GM12878 (cell line): ENCODE measurements at regions of chr1 and their contacts with region 1.

Region 1: GRCh38 chr1:39098546-39099250 is 72.5 kb downstream of the NDUFS5 start:
- DNase-seq: no peak
- ATAC-seq: peak; percentile 79
- H3K4me3 ChIP-seq: no peak overlapping the region
- H3K27ac ChIP-seq: no peak overlapping the region
- H3K4me1 ChIP-seq: peaks cover 13% of the 10 kb centered on the region
- H3K27me3 ChIP-seq: no peaks in the 10 kb centered on the region
- CTCF ChIP-seq: peak; percentile 76 to 87 (median 86)
- EP300 ChIP-seq: no peak
- POLR2A ChIP-seq: no peak
- RAD21 ChIP-seq: peak; percentile 96

Region 2: GRCh38 chr1:38941527-38942019 is 157.1 kb before region 1 on chr1 and contains the start of gene RHBDL2:
- CTCF ChIA-PET with region 1: no interaction called
- POLR2A ChIA-PET with region 1: no interaction called
- RAD21 ChIA-PET with region 1: no interaction called
- SMC1A ChIA-PET with region 1: no interaction called
- in situ Hi-C with region 1: no loop called
- intact Hi-C with region 1: no loop called
- DNase-seq: no peak
- ATAC-seq: no peak
- H3K4me3 ChIP-seq: no peak within 1 kb of the TSS
- H3K27ac ChIP-seq: no peak within 1 kb of the TSS
- H3K4me1 ChIP-seq: no peaks in the 10 kb centered on the region
- H3K27me3 ChIP-seq: no peaks in the 10 kb centered on the region; a peak in 1 of 4 replicates
- CTCF ChIP-seq: no peak
- EP300 ChIP-seq: no peak
- POLR2A ChIP-seq: no peak
- RAD21 ChIP-seq: no peak
- polyA plus RNA-seq, gene RHBDL2: 0.05 TPM in 1 of 2 experiments, not detected in the other

Region 3: GRCh38 chr1:39167632-39168209 is 69.0 kb after region 1 on chr1:
- CTCF ChIA-PET with region 1: interaction called, 10 read pairs
- POLR2A ChIA-PET with region 1: no interaction called
- RAD21 ChIA-PET with region 1: no interaction called
- SMC1A ChIA-PET with region 1: no interaction called
- in situ Hi-C with region 1: no loop called
- intact Hi-C with region 1: no loop called
- DNase-seq: no peak
- ATAC-seq: no peak
- H3K4me3 ChIP-seq: no peak overlapping the region
- H3K27ac ChIP-seq: no peak overlapping the region
- H3K4me1 ChIP-seq: no peaks in the 10 kb centered on the region
- H3K27me3 ChIP-seq: no peaks in the 10 kb centered on the region
- CTCF ChIP-seq: no peak
- EP300 ChIP-seq: no peak
- POLR2A ChIP-seq: no peak
- RAD21 ChIP-seq: no peak

Region 4: DNA sequence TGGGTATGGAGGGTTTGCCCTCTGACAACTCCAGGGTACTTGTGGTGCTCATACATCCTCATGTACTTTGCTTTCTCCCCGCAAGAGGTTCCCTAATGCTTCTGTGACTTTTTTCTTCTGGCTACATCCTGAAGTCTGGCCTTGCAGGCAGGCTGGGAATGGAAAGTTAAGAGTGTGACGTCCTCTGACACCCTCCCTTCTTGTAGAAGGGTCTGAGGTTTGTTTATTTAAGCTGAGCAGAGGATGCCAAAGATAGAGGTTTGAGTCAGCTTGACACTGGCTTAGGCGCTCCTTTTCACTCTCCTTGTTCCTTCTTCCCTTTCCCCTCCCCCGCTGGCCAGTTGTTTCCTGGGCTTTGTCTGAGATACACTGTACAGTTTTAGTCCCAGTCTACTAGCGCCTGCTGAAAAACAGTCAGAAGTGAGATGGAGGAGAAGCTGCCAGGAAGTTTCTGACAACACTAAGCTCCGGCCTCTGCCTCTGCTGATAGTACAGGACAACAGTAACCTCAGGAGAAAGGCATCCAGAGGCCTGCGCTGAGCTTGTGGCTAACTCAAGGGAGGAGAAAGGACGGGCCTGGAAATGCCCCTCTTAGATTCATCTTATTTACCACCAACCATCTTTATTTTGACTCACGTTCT is 105.9 kb after region 1 on chr1 and contains the start of gene MACF1:
- CTCF ChIA-PET with region 1: interaction called, 9 read pairs
- POLR2A ChIA-PET with region 1: interaction called, 3 read pairs
- RAD21 ChIA-PET with region 1: interaction called, 11 read pairs
- SMC1A ChIA-PET with region 1: interaction called, 3 read pairs
- in situ Hi-C with region 1: no loop called
- intact Hi-C with region 1: no loop called
- DNase-seq: no peak
- ATAC-seq: peak; percentile 70
- H3K4me3 ChIP-seq: peak within 1 kb of the TSS; percentile 67
- H3K27ac ChIP-seq: peak within 1 kb of the TSS; percentile 83
- H3K4me1 ChIP-seq: peaks cover 12% of the 10 kb centered on the region
- H3K27me3 ChIP-seq: no peaks in the 10 kb centered on the region
- CTCF ChIP-seq: no peak; a peak in 1 of 6 replicates
- EP300 ChIP-seq: no peak
- POLR2A ChIP-seq: no peak
- RAD21 ChIP-seq: 0 out of 2 replicates have a peak, but pooled peaks have one; percentile 15
- polyA plus RNA-seq, gene MACF1: 15.5 to 25.1 TPM

Region 5: DNA sequence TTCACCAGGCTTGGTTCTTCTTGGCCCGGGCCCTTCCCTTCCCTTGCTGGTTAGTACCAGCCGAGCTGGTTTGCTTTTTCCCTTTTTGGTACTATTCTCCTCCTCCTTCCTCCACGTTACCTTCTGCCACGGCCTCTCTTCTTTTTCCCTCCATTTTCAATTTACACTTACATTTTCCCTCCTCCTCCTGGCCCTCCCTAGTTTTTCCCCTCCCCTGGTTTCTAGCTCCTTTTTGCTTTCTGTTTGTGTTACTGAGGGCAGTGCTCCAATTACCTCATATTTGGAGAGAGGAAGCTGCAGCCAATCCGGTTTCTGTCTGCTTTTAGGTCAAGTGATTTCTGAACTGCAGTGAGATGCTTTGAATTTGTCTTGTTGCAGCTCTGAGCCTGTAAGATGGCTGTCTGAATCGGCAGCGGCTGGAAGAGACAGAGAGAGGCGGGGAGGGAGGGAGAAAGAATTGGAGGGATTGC is 169.4 kb after region 1 on chr1:
- CTCF ChIA-PET with region 1: interaction called, 44 read pairs
- POLR2A ChIA-PET with region 1: no interaction called
- RAD21 ChIA-PET with region 1: interaction called, 7 read pairs
- SMC1A ChIA-PET with region 1: interaction called, 52 read pairs
- in situ Hi-C with region 1: loop called (anchors 5 kb)
- intact Hi-C with region 1: no loop called
- DNase-seq: no peak
- ATAC-seq: peak; percentile 29
- H3K4me3 ChIP-seq: peak overlapping the region; percentile 57; the same call in 1 of the 2 replicates
- H3K27ac ChIP-seq: peak overlapping the region; percentile 81
- H3K4me1 ChIP-seq: peaks cover 57% of the 10 kb centered on the region
- H3K27me3 ChIP-seq: no peaks in the 10 kb centered on the region
- CTCF ChIP-seq: no peak
- EP300 ChIP-seq: no peak
- POLR2A ChIP-seq: peak; percentile 38; the same call in 1 of the 2 replicates
- RAD21 ChIP-seq: no peak

Region 6: DNA sequence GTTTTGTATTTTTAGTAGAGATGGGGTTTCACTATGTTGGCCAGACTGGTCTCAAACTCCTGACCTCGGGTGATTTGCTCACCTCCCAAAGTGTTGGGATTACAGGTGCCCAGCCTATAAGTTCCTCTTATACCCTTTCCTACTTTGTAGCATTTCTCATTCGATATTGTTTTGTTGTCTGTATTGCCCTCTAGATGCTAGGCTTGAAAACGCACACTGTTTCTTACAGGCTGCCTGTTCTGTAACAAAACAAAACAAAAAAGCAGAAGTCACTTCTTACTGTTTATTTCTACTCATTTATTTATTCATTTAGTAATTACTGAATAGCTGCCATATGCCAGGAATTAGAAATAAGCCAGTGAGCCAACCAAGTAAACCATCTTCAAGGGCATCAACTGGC is 255.9 kb after region 1 on chr1:
- CTCF ChIA-PET with region 1: interaction called, 10 read pairs
- POLR2A ChIA-PET with region 1: no interaction called
- RAD21 ChIA-PET with region 1: no interaction called
- SMC1A ChIA-PET with region 1: interaction called, 4 read pairs
- in situ Hi-C with region 1: no loop called
- intact Hi-C with region 1: no loop called
- DNase-seq: no peak
- ATAC-seq: no peak
- H3K4me3 ChIP-seq: no peak overlapping the region
- H3K27ac ChIP-seq: no peak overlapping the region
- H3K4me1 ChIP-seq: no peaks in the 10 kb centered on the region
- H3K27me3 ChIP-seq: no peaks in the 10 kb centered on the region
- CTCF ChIP-seq: peak in 2 of 3 experiments; percentile 7 to 20; a peak in 1 of 6 replicates
- EP300 ChIP-seq: no peak
- POLR2A ChIP-seq: no peak
- RAD21 ChIP-seq: 0 out of 2 replicates have a peak, but pooled peaks have one; percentile 7

Region 7: GRCh38 chr1:39609618-39610331 is 511.1 kb after region 1 on chr1:
- CTCF ChIA-PET with region 1: interaction called, 15 read pairs
- POLR2A ChIA-PET with region 1: no interaction called
- RAD21 ChIA-PET with region 1: interaction called, 4 read pairs
- SMC1A ChIA-PET with region 1: interaction called, 3 read pairs
- in situ Hi-C with region 1: no loop called
- intact Hi-C with region 1: loop called (anchors 5 kb)
- DNase-seq: no peak
- ATAC-seq: peak; percentile 97
- H3K4me3 ChIP-seq: no peak overlapping the region
- H3K27ac ChIP-seq: no peak overlapping the region
- H3K4me1 ChIP-seq: peaks cover 5% of the 10 kb centered on the region
- H3K27me3 ChIP-seq: no peaks in the 10 kb centered on the region
- CTCF ChIP-seq: peak; percentile 78 to 95 (median 81)
- EP300 ChIP-seq: no peak
- POLR2A ChIP-seq: no peak
- RAD21 ChIP-seq: peak; percentile 60

Region 8: GRCh38 chr1:39973503-39974135 is 874.9 kb after region 1 on chr1:
- CTCF ChIA-PET with region 1: no interaction called
- POLR2A ChIA-PET with region 1: no interaction called
- RAD21 ChIA-PET with region 1: no interaction called
- SMC1A ChIA-PET with region 1: no interaction called
- in situ Hi-C with region 1: no loop called
- intact Hi-C with region 1: no loop called
- DNase-seq: no peak
- ATAC-seq: peak; percentile 87
- H3K4me3 ChIP-seq: no peak overlapping the region
- H3K27ac ChIP-seq: no peak overlapping the region
- H3K4me1 ChIP-seq: peaks cover 3% of the 10 kb centered on the region
- H3K27me3 ChIP-seq: no peaks in the 10 kb centered on the region
- CTCF ChIP-seq: peak; percentile 97
- EP300 ChIP-seq: no peak
- POLR2A ChIP-seq: no peak
- RAD21 ChIP-seq: peak; percentile 100